AG04450 (cell line): ENCODE measurements at regions of chr1 and their contacts with region 1.

Region 1: GRCh38 chr1:36385410-36386257 is at the start of gene STK40:
- DNase-seq: peak; percentile 99
- H3K4me3 ChIP-seq: peak within 1 kb of the TSS; percentile 92
- H3K27ac ChIP-seq: peak within 1 kb of the TSS; percentile 100
- H3K27me3 ChIP-seq: no peaks in the 10 kb centered on the region
- CTCF ChIP-seq: no peak
- polyA plus RNA-seq, gene STK40: 26.4 and 30.3 TPM in 2 replicates

Region 2: DNA sequence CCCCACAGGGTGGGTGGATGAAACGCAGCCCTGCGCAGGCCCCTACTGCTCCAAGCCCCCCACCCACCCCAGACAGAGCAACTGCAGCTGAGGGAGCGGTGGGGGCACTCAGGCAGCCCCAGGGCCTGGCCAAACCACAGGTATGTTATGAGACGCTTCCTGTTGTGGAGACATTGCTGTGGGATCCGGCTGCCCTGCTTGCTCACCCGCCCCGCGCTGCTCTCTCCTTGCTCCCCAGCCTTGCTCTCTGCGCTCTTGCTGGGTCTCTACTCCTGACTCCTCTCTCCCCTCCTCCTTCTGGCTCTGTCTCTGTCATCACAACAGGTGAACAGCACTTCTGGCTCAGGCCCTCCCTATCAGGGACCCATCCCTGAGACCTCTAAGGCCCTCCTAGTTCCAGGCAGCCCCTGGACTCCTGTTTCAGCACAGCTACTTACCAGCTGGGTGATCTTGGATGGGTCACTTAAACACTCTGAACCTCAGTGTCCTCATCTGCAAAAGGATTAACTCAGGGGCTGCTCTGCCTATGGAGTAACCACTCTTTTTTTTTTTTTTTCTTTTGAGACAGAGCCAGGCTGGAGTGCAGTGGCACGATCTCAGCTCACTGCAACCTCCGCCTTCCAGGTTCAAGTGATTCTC is 276.5 kb before region 1 on chr1:
- CTCF ChIA-PET with region 1: no interaction called
- POLR2A ChIA-PET with region 1: interaction called, 10 read pairs
- DNase-seq: peak; percentile 18
- H3K4me3 ChIP-seq: no peak overlapping the region
- H3K27ac ChIP-seq: no peak overlapping the region
- H3K27me3 ChIP-seq: no peaks in the 10 kb centered on the region
- CTCF ChIP-seq: no peak

Region 3: GRCh38 chr1:36350659-36351226 is 34.9 kb before region 1 on chr1:
- CTCF ChIA-PET with region 1: interaction called, 3 read pairs
- POLR2A ChIA-PET with region 1: interaction called, 21 read pairs
- DNase-seq: no peak
- H3K4me3 ChIP-seq: no peak overlapping the region
- H3K27ac ChIP-seq: peak overlapping the region; percentile 98
- H3K27me3 ChIP-seq: no peaks in the 10 kb centered on the region
- CTCF ChIP-seq: no peak

Region 4: GRCh38 chr1:36369061-36369861 is 16.4 kb before region 1 on chr1:
- CTCF ChIA-PET with region 1: interaction called, 20 read pairs
- POLR2A ChIA-PET with region 1: interaction called, 13 read pairs
- DNase-seq: no peak
- H3K4me3 ChIP-seq: no peak overlapping the region
- H3K27ac ChIP-seq: no peak overlapping the region
- H3K27me3 ChIP-seq: no peaks in the 10 kb centered on the region
- CTCF ChIP-seq: peak; percentile 89

Region 5: DNA sequence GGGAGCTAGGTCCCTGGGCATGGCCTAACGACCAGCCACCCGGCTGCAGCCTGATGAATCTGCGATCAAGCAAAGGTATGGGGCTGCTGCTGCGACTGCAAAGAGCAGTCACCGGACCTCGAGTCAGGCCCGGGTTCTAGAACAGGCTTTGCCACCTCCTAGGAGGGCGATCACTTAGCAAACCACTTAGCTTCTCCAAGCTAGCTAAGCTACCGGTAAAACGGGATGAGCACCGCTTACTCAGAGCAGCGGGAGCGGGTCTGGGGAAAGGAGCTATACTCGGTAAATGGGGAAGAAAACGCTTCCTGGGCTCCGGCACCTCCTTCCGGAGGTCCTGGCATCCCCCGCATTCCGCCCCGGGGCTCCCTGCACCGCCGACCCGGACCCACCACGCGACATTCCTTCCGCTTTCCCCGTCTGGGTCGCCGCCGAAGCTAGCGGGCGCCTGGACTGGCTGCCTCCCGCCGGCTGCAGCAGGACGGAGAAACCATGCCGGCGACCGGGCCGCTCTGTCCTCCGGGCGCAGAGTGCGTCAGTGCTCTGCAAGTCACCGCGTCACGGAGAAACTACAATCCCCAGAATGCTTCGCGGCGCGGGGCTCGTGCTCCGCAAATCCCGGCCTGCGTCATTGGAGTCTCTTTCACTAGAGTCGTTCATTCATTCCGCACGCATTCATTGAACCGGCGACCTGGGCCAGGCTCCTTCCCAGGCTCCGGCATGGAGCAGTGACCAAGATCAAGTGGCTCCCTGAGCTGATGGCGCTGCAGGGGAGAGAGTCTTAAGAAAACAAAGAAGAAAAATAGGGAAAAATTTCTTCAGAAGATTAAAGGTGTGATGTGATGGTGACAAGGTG is 12.0 kb after region 1 on chr1 and contains the start of gene LSM10:
- CTCF ChIA-PET with region 1: interaction called, 4 read pairs
- POLR2A ChIA-PET with region 1: interaction called, 28 read pairs
- DNase-seq: peak; percentile 74
- H3K4me3 ChIP-seq: peak within 1 kb of the TSS; percentile 84
- H3K27ac ChIP-seq: peak within 1 kb of the TSS; percentile 69
- H3K27me3 ChIP-seq: no peaks in the 10 kb centered on the region
- CTCF ChIP-seq: no peak
- polyA plus RNA-seq, gene LSM10: 50.8 and 63.6 TPM in 2 replicates

Region 6: DNA sequence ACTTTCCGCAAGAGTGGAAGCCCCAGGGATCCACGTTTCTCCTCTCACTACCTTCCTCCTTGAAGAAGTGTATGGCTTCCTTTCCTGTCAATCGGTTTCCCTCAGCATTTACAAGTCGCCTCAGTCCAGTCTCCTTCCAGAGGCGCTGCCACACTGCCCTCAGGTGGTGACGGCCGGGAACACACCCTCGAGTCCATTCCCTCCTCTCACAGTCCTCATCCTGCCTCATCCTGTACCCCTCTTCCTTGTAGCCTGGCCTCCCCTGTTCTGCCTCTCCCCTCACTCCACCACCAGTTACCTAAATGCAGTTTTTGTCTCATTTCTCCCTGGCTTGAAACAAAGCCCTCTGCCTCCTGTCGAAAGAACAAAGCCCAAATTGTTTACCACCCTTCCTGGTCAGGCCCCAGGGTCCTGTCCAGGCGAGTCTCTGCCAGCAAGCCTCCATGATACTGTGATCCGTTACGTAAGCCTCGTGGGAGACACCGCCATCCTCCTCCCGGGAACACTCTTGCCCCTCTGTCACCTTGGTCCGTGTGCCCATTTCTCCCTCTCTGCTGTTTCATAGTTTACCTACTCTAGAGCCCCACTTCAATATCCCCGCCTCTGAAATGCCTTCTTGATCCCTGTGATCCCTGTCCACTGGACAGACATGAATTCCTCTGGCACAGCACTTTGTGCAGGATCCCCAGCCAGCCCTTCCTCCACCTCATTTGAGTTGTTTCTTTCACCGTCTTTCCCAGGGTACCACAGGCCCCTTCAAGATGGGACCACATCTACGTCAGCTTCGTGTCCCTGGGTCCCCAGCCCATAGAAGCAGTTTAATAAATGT is 35.4 kb after region 1 on chr1:
- CTCF ChIA-PET with region 1: interaction called, 4 read pairs
- POLR2A ChIA-PET with region 1: interaction called, 18 read pairs
- DNase-seq: peak; percentile 61
- H3K4me3 ChIP-seq: no peak overlapping the region
- H3K27ac ChIP-seq: no peak overlapping the region
- H3K27me3 ChIP-seq: no peaks in the 10 kb centered on the region
- CTCF ChIP-seq: peak; percentile 98